ENCODE measurements at regions of chr1 and their contacts with region 1.

Region 1: GRCh38 chr1:80417631-80418030 is 1383.1 kb upstream of the ADGRL2 start:
- DNase-seq: peak; percentile 90
- H3K4me3 ChIP-seq: no peak overlapping the region
- H3K27ac ChIP-seq: peak overlapping the region; percentile 93
- H3K4me1 ChIP-seq: peaks cover 14% of the 10 kb centered on the region
- H3K27me3 ChIP-seq: no peaks in the 10 kb centered on the region
- CTCF ChIP-seq: no peak

Region 2: DNA sequence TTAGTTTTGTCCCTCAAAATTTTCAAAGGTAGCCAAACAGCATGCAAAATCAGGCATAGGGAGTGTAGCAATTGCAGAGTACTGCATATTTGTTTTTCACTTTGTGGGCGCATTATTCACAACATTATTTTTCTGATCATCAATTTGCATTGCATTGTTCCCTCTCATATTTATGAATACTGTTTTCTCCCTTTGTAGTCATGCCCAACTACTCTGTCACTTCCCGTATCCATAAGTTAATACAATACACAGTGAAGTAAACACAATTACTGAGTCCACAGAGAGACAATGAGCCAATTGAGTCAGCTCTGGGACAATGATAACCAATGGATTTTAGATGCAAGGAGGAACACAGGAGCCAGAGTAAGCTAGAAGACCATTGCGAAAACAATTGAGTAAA is 467.1 kb before region 1 on chr1:
- CTCF ChIA-PET with region 1: no interaction called
- dilution Hi-C with region 1: no loop called
- in situ Hi-C with region 1: no loop called
- intact Hi-C with region 1: no loop called
- DNase-seq: no peak
- H3K4me3 ChIP-seq: no peak overlapping the region
- H3K27ac ChIP-seq: no peak overlapping the region
- H3K4me1 ChIP-seq: no peaks in the 10 kb centered on the region
- H3K27me3 ChIP-seq: no peaks in the 10 kb centered on the region
- CTCF ChIP-seq: no peak

Region 3: DNA sequence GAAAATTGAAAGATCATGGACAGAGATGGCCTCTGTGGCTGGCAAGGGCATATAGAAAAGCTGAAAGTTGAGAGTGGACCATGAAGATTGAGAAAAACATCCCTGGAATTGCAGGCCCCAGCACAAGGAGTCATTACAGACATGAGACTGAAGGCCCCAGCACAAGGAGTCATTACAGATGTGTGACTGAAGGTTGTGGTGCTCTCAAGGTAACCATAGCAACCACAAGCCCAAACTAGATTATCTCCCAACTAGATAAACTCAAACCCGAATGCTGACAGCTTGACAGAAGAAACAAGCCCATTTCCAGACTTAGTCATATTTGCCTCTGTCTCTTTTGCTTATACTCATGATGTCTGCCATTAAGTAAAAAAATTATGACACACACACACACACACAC is 159.0 kb before region 1 on chr1:
- CTCF ChIA-PET with region 1: no interaction called
- dilution Hi-C with region 1: no loop called
- in situ Hi-C with region 1: no loop called
- intact Hi-C with region 1: loop called (anchors 10 kb)
- DNase-seq: peak; percentile 66
- H3K4me3 ChIP-seq: no peak overlapping the region
- H3K27ac ChIP-seq: no peak overlapping the region
- H3K4me1 ChIP-seq: no peaks in the 10 kb centered on the region
- H3K27me3 ChIP-seq: no peaks in the 10 kb centered on the region
- CTCF ChIP-seq: no peak

Region 4: GRCh38 chr1:80375677-80376076 is 42.0 kb before region 1 on chr1:
- CTCF ChIA-PET with region 1: no interaction called
- dilution Hi-C with region 1: no loop called
- in situ Hi-C with region 1: no loop called
- intact Hi-C with region 1: loop called (anchors 2 kb)
- DNase-seq: peak; percentile 84
- H3K4me3 ChIP-seq: no peak overlapping the region
- H3K27ac ChIP-seq: peak overlapping the region; percentile 58
- H3K4me1 ChIP-seq: peaks cover 13% of the 10 kb centered on the region
- H3K27me3 ChIP-seq: no peaks in the 10 kb centered on the region
- CTCF ChIP-seq: no peak

Measured in mammary epithelial cell (primary cell).